Psoas muscle (tissue), 8 donors: ENCODE measurements at regions of chr3 and their contacts with region 1.

Region 1: GRCh38 chr3:29144807-29145206 is 136.1 kb upstream of the RBMS3 start:
- DNase-seq: peak in 1 of 2 donors; percentile 17
- ATAC-seq: peak; percentile 77 to 86 (median 81)
- H3K4me3 ChIP-seq: peak overlapping the region; percentile 24
- H3K27ac ChIP-seq: no peak overlapping the region
- H3K4me1 ChIP-seq: peaks cover 13% of the 10 kb centered on the region
- H3K27me3 ChIP-seq: no peaks in the 10 kb centered on the region
- CTCF ChIP-seq: peak; percentile 44

Region 2: GRCh38 chr3:29764603-29765254 is 619.9 kb after region 1 on chr3:
- intact Hi-C with region 1: loop called (anchors 5 kb)
- DNase-seq: no peak
- ATAC-seq: peak in 2 of 4 donors; percentile 55 to 59
- H3K4me3 ChIP-seq: no peak overlapping the region
- H3K27ac ChIP-seq: no peak overlapping the region
- H3K4me1 ChIP-seq: peaks cover 18% of the 10 kb centered on the region
- H3K27me3 ChIP-seq: no peaks in the 10 kb centered on the region
- CTCF ChIP-seq: peak; percentile 61